Motor neuron (in vitro differentiated cells): ENCODE measurements at regions of chr12 and their contacts with region 1.

Region 1: GRCh38 chr12:104740668-104741067 is 217.4 kb downstream of the SLC41A2 start:
- ATAC-seq: no peak
- H3K4me3 ChIP-seq: no peak overlapping the region
- H3K27ac ChIP-seq: peak overlapping the region in 1 of 2 donors; percentile 14
- H3K4me1 ChIP-seq: peaks cover 23 to 45% of the 10 kb centered on the region in 2 donors

Region 2: GRCh38 chr12:104456417-104456949 is 284.2 kb before region 1 on chr12 and contains the start of gene CHST11:
- in situ Hi-C with region 1: loop called in 1 of 9 experiments (anchors 25 kb)
- ATAC-seq: peak; percentile 76 to 93 (median 90)
- H3K4me3 ChIP-seq: peak within 1 kb of the TSS; percentile 74 to 99 (median 89)
- H3K27ac ChIP-seq: peak within 1 kb of the TSS; percentile 62
- H3K4me1 ChIP-seq: peaks cover 13 to 15% of the 10 kb centered on the region in 2 donors
- total RNA-seq, gene CHST11: 9.3 to 36.8 (median 12.9) TPM